ENCODE measurements at regions of chr12 and their contacts with region 1.

Region 1: DNA sequence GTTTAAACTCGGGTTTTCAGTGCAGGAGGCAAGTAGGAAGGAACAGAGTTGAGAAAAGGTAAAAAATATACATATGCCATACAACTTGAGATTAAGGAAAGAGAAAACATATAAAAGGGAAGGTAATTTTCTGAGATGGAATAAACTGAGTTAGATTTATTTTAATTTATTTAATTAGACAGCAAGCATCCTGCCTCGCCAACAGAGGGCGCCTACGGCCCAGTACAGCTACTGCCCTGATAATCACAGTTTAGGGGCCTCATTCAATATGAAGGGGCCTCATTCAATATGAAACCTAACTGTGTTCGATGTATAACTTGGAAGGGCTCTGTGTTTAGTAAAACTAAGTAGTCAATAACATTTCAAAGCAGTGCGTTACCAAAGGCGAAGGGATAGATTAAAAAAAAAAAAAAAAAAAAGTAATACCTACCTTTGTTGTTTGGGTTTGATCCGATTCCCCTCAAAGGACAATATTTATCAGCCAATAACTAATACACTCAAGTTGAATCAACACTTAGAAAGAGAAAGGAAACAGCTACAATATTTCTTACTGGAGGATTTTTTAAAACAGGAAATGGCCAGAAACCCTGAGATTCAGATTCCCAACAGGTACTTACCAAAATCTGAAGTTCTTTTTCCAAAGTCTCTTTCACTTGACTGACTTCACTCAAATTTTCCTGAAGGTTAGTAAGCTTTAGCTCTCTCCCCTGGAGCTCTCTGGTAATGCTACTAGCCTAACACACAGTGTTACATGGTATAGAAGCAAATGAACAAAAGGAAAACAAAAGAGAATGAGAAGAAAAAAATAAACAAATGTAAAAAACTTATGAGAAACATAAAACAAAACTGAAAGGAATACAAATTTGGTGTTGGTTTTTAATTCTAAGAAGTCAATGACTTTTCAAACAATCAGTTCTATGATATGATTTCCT is 70.0 kb upstream of the VPS33A start:
- DNase-seq: peak; percentile 61
- H3K4me3 Mint-ChIP-seq: no peak overlapping the region
- H3K27ac Mint-ChIP-seq: peak overlapping the region; percentile 84
- H3K4me1 Mint-ChIP-seq: peaks cover 18% of the 10 kb centered on the region
- H3K27me3 Mint-ChIP-seq: no peaks in the 10 kb centered on the region

Region 2: DNA sequence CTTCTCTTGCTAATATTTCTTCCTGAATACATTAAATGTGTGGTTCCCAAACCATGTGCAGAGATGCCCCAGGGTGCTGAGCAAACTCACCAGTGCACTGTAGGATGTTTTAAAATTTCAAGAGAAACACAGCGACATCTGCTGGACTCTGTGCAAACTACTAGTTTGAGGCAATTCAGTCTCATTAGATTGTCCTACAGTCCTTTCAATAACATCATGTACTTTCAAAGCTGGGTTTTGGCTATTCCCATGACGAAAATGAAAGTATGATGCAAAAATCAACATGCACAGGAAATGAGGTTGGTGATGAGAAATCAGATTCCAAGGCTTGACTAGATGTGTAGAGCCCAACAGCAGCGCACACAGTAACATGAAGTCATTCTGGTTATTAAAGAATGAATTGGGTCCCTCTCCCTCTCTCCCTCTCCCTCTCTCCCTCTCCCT is 19.9 kb after region 1 on chr12:
- CTCF ChIA-PET with region 1: interaction called, 34 read pairs
- DNase-seq: peak; percentile 73
- H3K4me3 Mint-ChIP-seq: no peak overlapping the region
- H3K27ac Mint-ChIP-seq: peak overlapping the region; percentile 71
- H3K4me1 Mint-ChIP-seq: peaks cover 7% of the 10 kb centered on the region
- H3K27me3 Mint-ChIP-seq: no peaks in the 10 kb centered on the region

Measured in activated naive CD4-positive, alpha-beta T cell treated with anti-CD3 and anti-CD28 coated beads, Interleukin-2, amount 10 ng/mL, durations not matched to agents 7 days and 5 days (primary cell).